ENCODE measurements at regions of chr5 and their contacts with region 1.

Region 1: DNA sequence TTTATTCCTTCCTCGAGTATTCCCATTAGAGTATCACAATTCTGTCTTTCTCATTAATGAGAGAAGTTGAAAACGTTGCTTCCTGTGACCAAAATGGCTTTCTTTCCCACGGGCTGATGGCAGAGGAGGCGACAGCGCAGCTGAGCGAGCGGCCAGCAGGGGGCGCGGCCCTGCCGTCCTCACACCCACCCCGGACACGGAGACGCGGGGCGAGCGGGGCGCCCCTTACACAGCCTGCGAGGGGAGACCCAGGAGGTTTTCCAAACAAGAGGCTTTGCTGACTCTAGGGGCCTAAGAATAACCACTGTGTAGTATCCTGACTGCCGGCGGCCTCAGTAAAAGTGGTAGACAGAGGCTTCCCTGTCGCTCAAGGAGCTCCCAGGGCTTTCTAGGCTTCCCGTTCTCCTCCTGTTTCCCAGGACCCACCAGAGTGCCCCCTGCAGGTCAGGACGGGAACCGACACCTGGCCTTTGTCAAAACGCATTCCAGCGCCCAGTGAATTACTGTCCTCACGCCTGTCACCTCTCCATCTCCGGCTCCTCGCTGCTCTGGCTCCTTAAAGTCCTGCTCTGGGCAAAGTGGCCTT is 27.3 kb upstream of the FGF1 start:
- DNase-seq: peak; percentile 79 to 90 (median 86)
- H3K4me3 ChIP-seq: peak overlapping the region; percentile 39 to 51
- H3K4me3 Mint-ChIP-seq: peak overlapping the region; percentile 59 to 78 (median 74)
- H3K27ac ChIP-seq: peak overlapping the region; percentile 23
- H3K27ac Mint-ChIP-seq: peak overlapping the region in 3 of 7 donors; percentile 22 to 72 (median 23)
- H3K4me1 ChIP-seq: peaks cover 11% of the 10 kb centered on the region
- H3K4me1 Mint-ChIP-seq: peaks cover 7 to 18% (median 10%) of the 10 kb centered on the region in 4 donors
- H3K27me3 ChIP-seq: no peaks in the 10 kb centered on the region
- H3K27me3 Mint-ChIP-seq: peaks cover 0 to 3% of the 10 kb centered on the region in 2 donors

Region 2: DNA sequence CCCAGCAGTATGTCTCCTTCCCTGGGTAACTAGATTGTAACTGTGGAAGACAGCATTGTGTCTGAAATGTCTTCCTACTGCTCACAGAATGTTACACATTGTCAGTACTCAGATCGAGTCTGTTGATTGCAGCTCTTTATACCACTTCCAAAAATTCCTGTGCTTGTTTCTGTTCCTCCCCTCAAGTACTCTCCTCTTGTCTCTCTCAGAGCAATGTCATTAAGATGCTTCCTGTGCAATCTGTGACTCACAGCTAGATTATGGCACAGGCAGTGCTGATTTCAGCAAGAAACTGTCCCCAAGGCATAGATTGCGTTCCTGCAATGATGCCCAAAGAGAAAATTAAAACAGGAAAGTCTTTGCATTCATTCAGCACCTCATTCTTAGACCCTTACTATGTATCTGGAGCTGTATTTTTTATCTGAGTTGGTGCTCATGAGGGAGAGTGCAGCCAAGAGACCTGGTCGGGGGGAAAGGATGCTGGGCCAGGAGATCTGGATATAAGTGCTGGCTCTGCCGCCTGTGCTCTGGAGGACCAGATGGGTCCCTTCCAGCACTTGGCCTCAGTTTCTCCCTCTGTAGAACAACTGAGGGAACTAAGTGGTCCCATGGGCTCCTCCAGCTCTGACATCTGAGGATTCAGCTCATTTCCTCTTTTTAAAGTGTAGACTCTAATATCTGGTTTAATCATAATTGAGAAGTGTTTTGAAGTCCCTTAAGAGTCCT is 659.6 kb before region 1 on chr5:
- CTCF ChIA-PET with region 1: no interaction called
- POLR2A ChIA-PET with region 1: no interaction called
- intact Hi-C with region 1: no loop called
- DNase-seq: no peak
- H3K4me3 ChIP-seq: no peak overlapping the region
- H3K4me3 Mint-ChIP-seq: no peak overlapping the region
- H3K27ac ChIP-seq: no peak overlapping the region
- H3K27ac Mint-ChIP-seq: peak overlapping the region in 3 of 7 donors; percentile 44 to 73 (median 47)
- H3K4me1 ChIP-seq: no peaks in the 10 kb centered on the region
- H3K4me1 Mint-ChIP-seq: peaks cover 3 to 10% (median 4%) of the 10 kb centered on the region in 4 donors
- H3K27me3 ChIP-seq: no peaks in the 10 kb centered on the region
- H3K27me3 Mint-ChIP-seq: no peaks in the 10 kb centered on the region

Region 3: GRCh38 chr5:142726188-142726731 is 13.0 kb after region 1 on chr5:
- CTCF ChIA-PET with region 1: interaction called, 42 read pairs
- POLR2A ChIA-PET with region 1: no interaction called
- intact Hi-C with region 1: no loop called
- DNase-seq: no peak
- H3K4me3 ChIP-seq: no peak overlapping the region
- H3K4me3 Mint-ChIP-seq: no peak overlapping the region
- H3K27ac ChIP-seq: no peak overlapping the region
- H3K27ac Mint-ChIP-seq: peak overlapping the region in 1 of 7 donors; percentile 20
- H3K4me1 ChIP-seq: no peaks in the 10 kb centered on the region
- H3K4me1 Mint-ChIP-seq: peaks cover 0 to 3% (median 0%) of the 10 kb centered on the region in 4 donors
- H3K27me3 ChIP-seq: no peaks in the 10 kb centered on the region
- H3K27me3 Mint-ChIP-seq: peaks cover 0 to 3% of the 10 kb centered on the region in 2 donors

Region 4: GRCh38 chr5:142769741-142770631 is 56.8 kb after region 1 on chr5 and contains the start of gene ARHGAP26:
- CTCF ChIA-PET with region 1: interaction called, 24 read pairs
- POLR2A ChIA-PET with region 1: interaction called, 3 read pairs
- intact Hi-C with region 1: loop called (anchors 1 kb)
- DNase-seq: peak; percentile 87 to 91 (median 88)
- H3K4me3 ChIP-seq: peak within 1 kb of the TSS; percentile 74 to 89
- H3K4me3 Mint-ChIP-seq: peak within 1 kb of the TSS; percentile 94 to 98 (median 96)
- H3K27ac ChIP-seq: peak within 1 kb of the TSS; percentile 53
- H3K27ac Mint-ChIP-seq: peak within 1 kb of the TSS; percentile 85 to 97 (median 94)
- H3K4me1 ChIP-seq: peaks cover 14% of the 10 kb centered on the region
- H3K4me1 Mint-ChIP-seq: peaks cover 18 to 38% (median 26%) of the 10 kb centered on the region in 4 donors
- H3K27me3 ChIP-seq: no peaks in the 10 kb centered on the region
- H3K27me3 Mint-ChIP-seq: no peaks in the 10 kb centered on the region
- total RNA-seq, gene ARHGAP26: 22.6 to 22.7 TPM

Region 5: GRCh38 chr5:142881076-142881783 is 168.0 kb after region 1 on chr5:
- CTCF ChIA-PET with region 1: interaction called, 252 read pairs
- POLR2A ChIA-PET with region 1: interaction called, 3 read pairs
- intact Hi-C with region 1: loop called (anchors 1 kb)
- DNase-seq: no peak
- H3K4me3 ChIP-seq: no peak overlapping the region
- H3K4me3 Mint-ChIP-seq: no peak overlapping the region
- H3K27ac ChIP-seq: no peak overlapping the region
- H3K27ac Mint-ChIP-seq: peak overlapping the region in 1 of 7 donors; percentile 25
- H3K4me1 ChIP-seq: no peaks in the 10 kb centered on the region
- H3K4me1 Mint-ChIP-seq: peaks cover 0 to 3% (median 1%) of the 10 kb centered on the region in 4 donors
- H3K27me3 ChIP-seq: no peaks in the 10 kb centered on the region
- H3K27me3 Mint-ChIP-seq: no peaks in the 10 kb centered on the region

Region 6: DNA sequence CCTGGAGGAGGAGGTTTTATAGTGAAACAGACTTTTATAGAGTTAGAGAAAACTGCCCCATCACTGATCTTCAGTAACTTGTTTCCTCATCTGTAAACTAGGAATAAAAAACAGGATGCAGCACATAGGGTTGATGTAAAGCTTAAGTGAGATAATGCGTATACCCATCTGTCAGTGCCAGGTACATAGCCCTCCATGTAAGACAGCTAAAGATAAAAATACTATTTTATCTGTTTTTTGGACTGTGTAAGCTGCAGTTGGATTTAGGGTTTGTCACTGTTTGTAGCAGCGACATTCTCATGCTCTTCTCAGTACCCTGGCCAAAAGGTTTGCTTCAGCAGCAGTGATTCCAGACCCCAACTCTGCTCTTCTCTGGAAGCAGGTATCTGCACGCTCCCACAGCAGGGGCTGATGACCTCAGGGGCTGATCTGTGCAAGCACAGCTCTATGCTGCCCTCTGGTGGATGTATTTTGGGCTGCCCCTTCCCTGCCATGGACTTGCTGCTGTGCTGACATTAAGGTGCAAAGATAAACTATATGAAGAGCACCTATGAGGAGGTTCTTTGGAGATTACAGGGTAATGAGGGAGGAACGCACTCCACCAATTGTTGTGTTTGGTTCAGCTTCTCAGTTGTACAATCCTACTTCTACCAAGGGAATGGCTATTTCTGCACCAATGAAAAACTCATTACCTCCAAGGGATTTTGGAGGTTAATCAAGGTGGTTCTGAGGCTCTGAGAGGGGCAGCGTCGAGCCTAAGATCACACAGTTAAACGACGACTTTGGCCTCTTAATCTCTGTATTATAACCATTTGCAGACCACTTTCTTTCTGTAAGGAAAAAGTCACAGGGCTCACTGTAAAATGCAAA is 1111.9 kb after region 1 on chr5:
- CTCF ChIA-PET with region 1: interaction called, 11 read pairs
- POLR2A ChIA-PET with region 1: no interaction called
- intact Hi-C with region 1: loop called (anchors 2 kb)
- DNase-seq: peak; percentile 72 to 80 (median 75)
- H3K4me3 ChIP-seq: no peak overlapping the region
- H3K4me3 Mint-ChIP-seq: no peak overlapping the region
- H3K27ac ChIP-seq: no peak overlapping the region
- H3K27ac Mint-ChIP-seq: no peak overlapping the region
- H3K4me1 ChIP-seq: peaks cover 27% of the 10 kb centered on the region
- H3K4me1 Mint-ChIP-seq: peaks cover 16 to 19% (median 17%) of the 10 kb centered on the region in 4 donors
- H3K27me3 ChIP-seq: no peaks in the 10 kb centered on the region
- H3K27me3 Mint-ChIP-seq: peaks cover 0 to 2% of the 10 kb centered on the region in 2 donors